ENCODE measurements at regions of chr12 and their contacts with region 1.

Region 1: DNA sequence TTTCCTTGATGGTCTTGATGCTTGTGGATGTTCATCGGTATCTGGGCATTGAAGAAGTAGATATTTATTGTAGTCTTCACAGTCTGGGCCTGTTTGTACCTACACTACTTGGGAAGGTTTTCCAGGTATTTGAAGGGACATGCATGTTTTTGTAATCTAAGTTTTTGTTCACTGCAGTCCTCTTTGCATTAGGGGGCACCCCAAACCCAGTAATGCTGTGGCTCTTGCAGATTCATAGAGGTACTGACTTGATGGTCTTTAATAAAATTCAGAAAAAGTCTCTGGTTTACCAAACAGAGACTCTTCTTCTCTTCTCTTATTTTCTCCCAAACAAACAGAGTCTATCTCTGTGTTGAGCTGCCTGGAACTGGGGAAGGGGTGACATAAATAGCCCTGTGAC is 150.9 kb upstream of the SLC16A7 start:
- DNase-seq: peak; percentile 13
- H3K4me3 Mint-ChIP-seq: no peak overlapping the region
- H3K27ac Mint-ChIP-seq: no peak overlapping the region
- H3K4me1 Mint-ChIP-seq: no peaks in the 10 kb centered on the region
- H3K27me3 Mint-ChIP-seq: peaks cover 10% of the 10 kb centered on the region

Region 2: DNA sequence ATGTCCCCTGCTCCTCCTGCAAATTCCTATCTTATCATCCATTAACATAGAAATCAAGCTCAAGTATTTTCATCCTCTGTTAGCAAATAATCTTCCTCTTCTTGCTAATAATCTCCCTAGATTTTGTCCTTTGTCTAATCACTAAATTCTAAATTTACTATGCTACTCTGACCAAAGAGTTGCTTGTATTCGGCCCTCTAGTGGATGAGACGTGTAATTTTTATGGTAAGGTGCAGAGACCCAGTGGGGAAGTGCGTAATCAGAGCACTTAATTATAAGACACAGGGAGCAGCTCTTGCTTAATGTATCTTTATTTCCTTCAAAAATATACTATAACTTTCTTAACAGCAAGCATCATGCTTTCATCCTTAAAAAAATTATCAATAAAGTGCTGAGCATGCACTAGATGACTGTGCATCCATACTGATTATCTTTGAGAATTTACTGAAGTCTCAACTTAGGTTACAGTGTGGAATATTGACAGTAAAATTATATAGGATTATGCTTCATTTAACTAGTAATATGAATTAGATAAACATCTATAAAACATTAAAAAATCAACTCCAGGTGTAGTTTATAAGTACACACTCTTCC is 363.5 kb after region 1 on chr12:
- CTCF ChIA-PET with region 1: interaction called, 12 read pairs
- POLR2A ChIA-PET with region 1: no interaction called
- intact Hi-C with region 1: no loop called
- DNase-seq: no peak
- H3K4me3 Mint-ChIP-seq: no peak overlapping the region
- H3K27ac Mint-ChIP-seq: no peak overlapping the region
- H3K4me1 Mint-ChIP-seq: no peaks in the 10 kb centered on the region
- H3K27me3 Mint-ChIP-seq: no peaks in the 10 kb centered on the region

Region 3: GRCh38 chr12:60266381-60266852 is 821.5 kb after region 1 on chr12:
- CTCF ChIA-PET with region 1: no interaction called
- POLR2A ChIA-PET with region 1: no interaction called
- intact Hi-C with region 1: no loop called
- DNase-seq: no peak
- H3K4me3 Mint-ChIP-seq: no peak overlapping the region
- H3K27ac Mint-ChIP-seq: no peak overlapping the region
- H3K4me1 Mint-ChIP-seq: no peaks in the 10 kb centered on the region
- H3K27me3 Mint-ChIP-seq: no peaks in the 10 kb centered on the region

Measured in activated CD4-positive, alpha-beta memory T cell treated with anti-CD3 and anti-CD28 coated beads for 36 hours (primary cell).